GM12878 (cell line): ENCODE measurements at regions of chrX and their contacts with region 1.

Region 1: DNA sequence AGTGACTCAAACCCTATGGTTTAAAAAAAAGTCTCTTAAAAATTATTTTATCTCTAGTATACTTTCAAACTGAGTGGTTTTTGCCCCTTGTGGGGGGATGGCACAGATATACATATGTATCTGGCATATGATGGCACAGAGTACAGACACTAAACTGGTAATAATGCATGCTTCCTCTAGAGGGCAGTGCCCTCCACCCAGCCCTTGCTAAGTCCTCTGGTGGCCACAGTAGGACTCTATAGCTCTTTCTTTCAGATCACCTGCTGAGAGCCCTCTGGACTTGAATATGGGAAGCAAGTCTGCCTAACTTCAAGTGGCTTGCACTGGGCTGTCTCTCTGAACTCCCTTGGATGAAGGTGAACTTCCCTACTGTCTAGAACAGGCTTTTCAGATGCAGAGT is 66.3 kb downstream of the TSPAN7 start:
- DNase-seq: no peak
- ATAC-seq: peak; percentile 99
- H3K4me3 ChIP-seq: no peak overlapping the region
- H3K27ac ChIP-seq: no peak overlapping the region
- H3K4me1 ChIP-seq: no peaks in the 10 kb centered on the region
- H3K27me3 ChIP-seq: no peaks in the 10 kb centered on the region
- CTCF ChIP-seq: peak; percentile 59 to 78 (median 69)
- EP300 ChIP-seq: no peak
- POLR2A ChIP-seq: no peak
- RAD21 ChIP-seq: peak; percentile 73

Region 2: DNA sequence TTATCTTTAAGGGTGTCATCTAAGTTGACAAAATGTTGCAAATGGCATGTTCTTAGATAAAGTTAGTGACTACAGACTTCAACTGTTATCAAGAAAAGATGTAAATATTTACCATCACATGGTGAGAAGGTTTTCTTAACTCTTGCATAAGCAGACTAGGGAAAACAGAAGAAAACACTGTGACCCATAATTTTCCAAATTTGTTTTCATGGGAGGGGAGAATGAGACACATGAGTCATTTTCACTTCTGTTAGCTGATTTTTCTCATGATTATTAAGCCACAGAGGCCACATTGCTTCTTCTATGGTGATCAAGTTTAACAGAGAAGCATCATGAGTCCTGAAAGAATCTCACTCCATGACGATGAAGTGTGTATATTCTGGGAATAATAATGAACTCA is 651.5 kb before region 1 on chrX:
- CTCF ChIA-PET with region 1: no interaction called
- POLR2A ChIA-PET with region 1: no interaction called
- RAD21 ChIA-PET with region 1: no interaction called
- SMC1A ChIA-PET with region 1: no interaction called
- in situ Hi-C with region 1: no loop called
- intact Hi-C with region 1: no loop called
- DNase-seq: no peak
- ATAC-seq: no peak
- H3K4me3 ChIP-seq: no peak overlapping the region
- H3K27ac ChIP-seq: no peak overlapping the region
- H3K4me1 ChIP-seq: no peaks in the 10 kb centered on the region
- H3K27me3 ChIP-seq: no peaks in the 10 kb centered on the region; a peak in 1 of 4 replicates
- CTCF ChIP-seq: no peak
- EP300 ChIP-seq: no peak
- POLR2A ChIP-seq: no peak
- RAD21 ChIP-seq: no peak

Region 3: DNA sequence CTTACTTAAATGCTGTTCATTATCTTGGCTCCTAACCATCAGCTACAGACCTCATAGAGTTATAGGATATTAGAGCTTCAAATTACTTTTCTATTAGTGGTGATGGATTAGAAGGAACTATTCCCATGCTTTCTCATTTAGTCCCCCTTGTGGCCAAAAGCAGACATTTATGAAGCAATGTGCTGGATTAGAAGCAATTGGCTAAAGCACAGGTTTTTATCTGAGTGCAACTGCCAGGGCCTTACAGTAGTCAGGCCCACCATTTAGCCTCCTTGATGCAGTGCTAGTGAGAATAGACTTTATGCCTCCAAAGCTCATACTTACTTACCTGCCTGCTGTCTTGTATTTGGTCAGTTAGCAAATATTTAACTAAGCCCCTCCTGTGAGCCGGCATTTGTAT is 26.6 kb after region 1 on chrX:
- CTCF ChIA-PET with region 1: interaction called, 22 read pairs
- POLR2A ChIA-PET with region 1: interaction called, 3 read pairs
- RAD21 ChIA-PET with region 1: interaction called, 14 read pairs
- SMC1A ChIA-PET with region 1: interaction called, 18 read pairs
- in situ Hi-C with region 1: no loop called
- intact Hi-C with region 1: no loop called
- DNase-seq: no peak
- ATAC-seq: peak; percentile 41
- H3K4me3 ChIP-seq: no peak overlapping the region
- H3K27ac ChIP-seq: no peak overlapping the region
- H3K4me1 ChIP-seq: no peaks in the 10 kb centered on the region
- H3K27me3 ChIP-seq: no peaks in the 10 kb centered on the region
- CTCF ChIP-seq: peak; percentile 32 to 49 (median 36); a peak in 5 of 6 replicates
- EP300 ChIP-seq: no peak
- POLR2A ChIP-seq: no peak
- RAD21 ChIP-seq: peak; percentile 37; the same call in 1 of the 2 replicates

Region 4: DNA sequence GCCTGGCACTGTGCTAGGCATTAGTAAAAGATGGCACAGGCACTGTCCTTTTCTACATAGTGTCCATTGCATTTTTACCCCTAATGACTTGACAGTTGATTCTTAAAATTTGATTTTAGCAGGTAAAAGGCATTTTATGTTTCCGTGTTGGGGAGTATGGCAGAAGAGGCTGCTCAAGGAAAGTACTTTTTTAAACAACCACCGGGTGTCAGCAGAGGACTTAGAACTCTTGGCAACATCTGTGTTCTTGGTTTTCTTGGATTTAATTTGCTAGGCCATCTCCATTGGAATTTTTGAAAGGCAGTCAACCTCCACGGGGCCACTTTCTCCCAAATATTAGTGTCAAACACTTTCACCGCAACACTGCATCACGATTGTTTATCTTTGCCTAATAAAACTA is 36.6 kb after region 1 on chrX:
- CTCF ChIA-PET with region 1: interaction called, 13 read pairs
- POLR2A ChIA-PET with region 1: no interaction called
- RAD21 ChIA-PET with region 1: interaction called, 8 read pairs
- SMC1A ChIA-PET with region 1: interaction called, 10 read pairs
- in situ Hi-C with region 1: no loop called
- intact Hi-C with region 1: no loop called
- DNase-seq: no peak
- ATAC-seq: peak; percentile 54
- H3K4me3 ChIP-seq: no peak overlapping the region
- H3K27ac ChIP-seq: no peak overlapping the region
- H3K4me1 ChIP-seq: peaks cover 8% of the 10 kb centered on the region; the same call in 1 of the 2 replicates
- H3K27me3 ChIP-seq: no peaks in the 10 kb centered on the region; a peak in 1 of 4 replicates
- CTCF ChIP-seq: peak; percentile 25 to 56 (median 33); a peak in 3 of 6 replicates
- EP300 ChIP-seq: no peak
- POLR2A ChIP-seq: no peak
- RAD21 ChIP-seq: peak; percentile 57